GM12878 (cell line): ENCODE measurements at regions of chr1 and their contacts with region 1.

Region 1: GRCh38 chr1:40338745-40339424 is 21.8 kb upstream of the COL9A2 start:
- DNase-seq: peak; percentile 76
- ATAC-seq: peak; percentile 99
- H3K4me3 ChIP-seq: no peak overlapping the region
- H3K27ac ChIP-seq: no peak overlapping the region
- H3K4me1 ChIP-seq: peaks cover 5% of the 10 kb centered on the region; the same call in 1 of the 2 replicates
- H3K27me3 ChIP-seq: no peaks in the 10 kb centered on the region
- CTCF ChIP-seq: peak; percentile 99; a peak in 5 of 6 replicates
- EP300 ChIP-seq: no peak
- POLR2A ChIP-seq: no peak
- RAD21 ChIP-seq: peak; percentile 98

Region 2: DNA sequence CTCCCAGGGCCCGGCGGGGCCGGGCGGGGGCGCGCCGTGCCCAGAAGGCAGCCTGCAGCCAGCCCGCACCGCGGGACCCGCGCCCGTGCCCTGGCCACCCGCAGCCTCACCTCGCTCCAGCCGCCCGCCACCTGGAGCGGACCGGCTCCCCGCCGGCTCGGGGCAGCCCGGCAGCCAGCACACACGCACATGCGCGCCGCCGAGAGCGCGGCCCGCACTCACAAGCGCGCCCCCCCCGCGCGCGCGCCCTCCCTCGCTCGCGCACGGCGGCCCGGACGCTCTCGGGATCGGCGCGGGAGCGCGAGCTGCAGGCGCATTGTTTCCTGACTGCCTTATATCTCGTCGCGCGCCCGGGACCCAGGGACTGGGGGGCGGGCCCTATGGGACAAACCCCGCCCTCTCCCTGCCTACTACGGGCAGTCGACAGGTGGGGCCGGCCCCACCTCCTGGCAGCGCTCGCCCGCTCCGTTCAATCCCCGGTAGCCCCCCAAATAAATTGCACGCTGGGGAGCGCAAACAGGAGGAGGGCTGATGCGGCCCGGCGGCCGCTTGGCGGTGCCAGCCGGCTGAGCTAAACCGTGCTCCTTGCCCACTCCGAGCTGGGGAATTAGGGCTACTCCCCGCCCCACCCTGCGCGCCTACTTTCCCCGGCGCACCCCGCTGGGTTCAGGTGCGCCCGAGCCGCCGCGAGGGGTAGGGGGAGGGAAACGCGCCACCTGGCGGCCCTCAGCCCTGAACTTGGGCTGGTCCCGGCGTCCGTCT is 437.0 kb before region 1 on chr1 and contains the start of gene MYCL:
- CTCF ChIA-PET with region 1: no interaction called
- POLR2A ChIA-PET with region 1: no interaction called
- RAD21 ChIA-PET with region 1: no interaction called
- SMC1A ChIA-PET with region 1: no interaction called
- in situ Hi-C with region 1: no loop called
- intact Hi-C with region 1: no loop called
- DNase-seq: no peak
- ATAC-seq: peak; percentile 93
- H3K4me3 ChIP-seq: peak within 1 kb of the TSS; percentile 77
- H3K27ac ChIP-seq: no peak within 1 kb of the TSS
- H3K4me1 ChIP-seq: peaks cover 7% of the 10 kb centered on the region; the same call in 1 of the 2 replicates
- H3K27me3 ChIP-seq: peaks cover 10 to 12% of the 10 kb centered on the region in 2 experiments
- CTCF ChIP-seq: peak; percentile 61 to 84 (median 78)
- EP300 ChIP-seq: no peak
- POLR2A ChIP-seq: peak; percentile 63
- RAD21 ChIP-seq: peak; percentile 69
- polyA plus RNA-seq, gene MYCL: 0.11 to 0.26 TPM

Region 3: DNA sequence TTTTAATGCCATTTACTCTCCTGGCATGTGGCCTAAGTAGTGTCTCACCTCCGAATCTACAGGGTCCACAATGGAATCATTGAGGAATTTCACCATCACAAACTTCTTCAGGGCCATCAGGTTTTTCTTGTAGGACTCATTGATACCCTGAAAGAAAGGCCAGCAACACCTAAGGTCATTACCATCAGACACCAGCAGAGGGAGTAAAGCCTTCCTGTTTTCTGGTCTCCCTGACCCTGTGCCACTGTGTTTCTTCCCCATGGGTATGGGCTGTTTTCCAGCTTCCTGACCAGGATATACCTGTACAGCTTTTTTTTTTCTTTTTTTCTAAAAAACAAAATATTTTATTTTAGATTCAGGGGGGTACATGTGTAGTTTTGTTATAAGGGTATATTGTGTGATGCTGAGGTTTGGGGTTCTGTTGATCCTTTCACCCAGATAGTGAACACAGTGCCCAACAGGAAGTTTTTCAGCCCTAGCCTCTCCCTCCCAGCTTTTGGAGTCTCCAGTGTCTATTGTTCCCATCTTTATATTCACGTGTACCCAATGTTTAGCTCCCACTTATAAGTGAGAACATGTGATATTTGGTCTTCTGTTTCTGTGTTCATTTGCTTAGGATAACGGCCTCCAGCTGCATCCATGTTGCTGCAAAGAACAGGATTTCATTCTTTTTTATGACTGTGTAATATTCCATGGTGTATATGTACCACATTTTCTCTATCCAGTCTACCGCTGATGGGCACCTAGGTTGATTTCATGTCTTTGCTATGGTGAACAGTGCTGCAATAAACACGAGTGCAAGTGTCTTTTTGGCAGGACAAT is 260.2 kb before region 1 on chr1:
- CTCF ChIA-PET with region 1: interaction called, 271 read pairs
- POLR2A ChIA-PET with region 1: no interaction called
- RAD21 ChIA-PET with region 1: interaction called, 33 read pairs
- SMC1A ChIA-PET with region 1: interaction called, 37 read pairs
- in situ Hi-C with region 1: loop called (anchors 5 kb)
- intact Hi-C with region 1: loop called (anchors 1 kb)
- DNase-seq: no peak
- ATAC-seq: peak; percentile 98
- H3K4me3 ChIP-seq: no peak overlapping the region
- H3K27ac ChIP-seq: no peak overlapping the region
- H3K4me1 ChIP-seq: no peaks in the 10 kb centered on the region
- H3K27me3 ChIP-seq: no peaks in the 10 kb centered on the region
- CTCF ChIP-seq: peak; percentile 74 to 85 (median 75)
- EP300 ChIP-seq: no peak
- POLR2A ChIP-seq: no peak
- RAD21 ChIP-seq: peak; percentile 63

Region 4: GRCh38 chr1:40161125-40161887 is 177.6 kb before region 1 on chr1 and contains the start of gene RLF:
- CTCF ChIA-PET with region 1: interaction called, 332 read pairs
- POLR2A ChIA-PET with region 1: no interaction called
- RAD21 ChIA-PET with region 1: interaction called, 8 read pairs
- SMC1A ChIA-PET with region 1: interaction called, 182 read pairs
- in situ Hi-C with region 1: no loop called
- intact Hi-C with region 1: no loop called
- DNase-seq: peak; percentile 67
- ATAC-seq: peak; percentile 92
- H3K4me3 ChIP-seq: peak within 1 kb of the TSS; percentile 97
- H3K27ac ChIP-seq: peak within 1 kb of the TSS; percentile 93
- H3K4me1 ChIP-seq: no peaks in the 10 kb centered on the region
- H3K27me3 ChIP-seq: no peaks in the 10 kb centered on the region
- CTCF ChIP-seq: no peak
- EP300 ChIP-seq: no peak; a peak in 1 of 4 replicates
- POLR2A ChIP-seq: peak; percentile 99
- RAD21 ChIP-seq: no peak
- polyA plus RNA-seq, gene RLF: 2.0 to 3.6 TPM

Region 5: DNA sequence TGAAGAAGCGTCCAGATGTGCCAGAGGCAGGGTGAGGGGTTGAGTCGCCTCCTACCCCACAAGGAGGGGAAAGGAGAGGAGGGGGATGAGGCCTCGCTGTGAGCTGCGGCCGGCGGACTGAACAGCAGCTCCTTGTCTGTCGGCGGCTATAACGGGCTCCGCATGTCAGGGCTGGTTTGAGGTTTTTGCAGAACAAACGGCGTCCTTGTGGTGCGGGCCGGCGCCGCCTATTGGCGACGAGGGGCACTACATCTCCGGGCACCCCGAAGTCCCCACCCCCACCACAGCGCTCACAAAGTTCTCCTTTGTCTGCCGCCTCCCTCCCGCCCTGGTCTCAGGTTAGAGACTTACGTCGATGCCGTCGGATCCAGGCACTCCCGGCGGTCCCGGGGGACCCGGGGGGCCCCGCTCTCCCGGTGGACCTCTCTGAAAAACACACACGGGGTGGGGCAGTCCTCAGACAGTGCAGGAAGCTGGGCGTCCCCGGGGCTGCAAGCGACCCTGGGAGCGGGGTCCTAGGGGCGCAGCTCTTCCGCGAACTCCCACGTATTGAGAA is 23.6 kb before region 1 on chr1:
- CTCF ChIA-PET with region 1: interaction called, 170 read pairs
- POLR2A ChIA-PET with region 1: interaction called, 4 read pairs
- RAD21 ChIA-PET with region 1: interaction called, 75 read pairs
- SMC1A ChIA-PET with region 1: interaction called, 81 read pairs
- in situ Hi-C with region 1: no loop called
- intact Hi-C with region 1: no loop called
- DNase-seq: peak; percentile 53
- ATAC-seq: peak; percentile 72
- H3K4me3 ChIP-seq: peak overlapping the region; percentile 70
- H3K27ac ChIP-seq: peak overlapping the region; percentile 59
- H3K4me1 ChIP-seq: peaks cover 41% of the 10 kb centered on the region
- H3K27me3 ChIP-seq: peaks cover 4 to 9% of the 10 kb centered on the region in 2 experiments; a peak in 3 of 4 replicates
- CTCF ChIP-seq: peak; percentile 96 to 98 (median 98)
- EP300 ChIP-seq: peak in 1 of 2 experiments; percentile 24; a peak in 1 of 4 replicates
- POLR2A ChIP-seq: peak; percentile 87
- RAD21 ChIP-seq: peak; percentile 69

Region 6: DNA sequence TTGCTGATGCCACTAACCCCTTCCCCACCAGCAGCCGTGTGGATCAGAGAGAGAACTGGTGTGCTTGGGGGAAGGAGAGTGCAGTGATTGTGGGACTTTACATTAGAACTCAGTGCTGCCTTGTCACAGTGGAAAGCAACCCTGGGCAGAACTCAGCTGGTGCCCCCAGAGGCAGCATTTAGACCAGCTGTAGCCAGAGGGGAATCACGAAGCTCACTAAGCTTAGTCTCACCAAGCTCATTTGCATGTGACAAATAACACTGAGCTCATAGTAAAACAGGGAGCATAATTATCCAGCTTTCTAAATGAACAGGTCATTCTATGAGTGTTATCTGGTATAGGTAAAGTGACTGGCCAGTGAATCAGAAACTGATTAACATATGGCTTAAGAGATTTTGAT is 24.8 kb after region 1 on chr1:
- CTCF ChIA-PET with region 1: interaction called, 30 read pairs
- POLR2A ChIA-PET with region 1: interaction called, 3 read pairs
- RAD21 ChIA-PET with region 1: interaction called, 14 read pairs
- SMC1A ChIA-PET with region 1: interaction called, 27 read pairs
- in situ Hi-C with region 1: no loop called
- intact Hi-C with region 1: no loop called
- DNase-seq: no peak
- ATAC-seq: peak; percentile 100
- H3K4me3 ChIP-seq: no peak overlapping the region
- H3K27ac ChIP-seq: no peak overlapping the region
- H3K4me1 ChIP-seq: no peaks in the 10 kb centered on the region; the same call in 1 of the 2 replicates
- H3K27me3 ChIP-seq: no peaks in the 10 kb centered on the region
- CTCF ChIP-seq: peak; percentile 28 to 43 (median 36); a peak in 4 of 6 replicates
- EP300 ChIP-seq: no peak
- POLR2A ChIP-seq: no peak
- RAD21 ChIP-seq: peak; percentile 32

Region 7: GRCh38 chr1:40385437-40386358 is 46.8 kb after region 1 on chr1:
- CTCF ChIA-PET with region 1: interaction called, 17 read pairs
- POLR2A ChIA-PET with region 1: interaction called, 14 read pairs
- RAD21 ChIA-PET with region 1: interaction called, 8 read pairs
- SMC1A ChIA-PET with region 1: interaction called, 29 read pairs
- in situ Hi-C with region 1: no loop called
- intact Hi-C with region 1: no loop called
- DNase-seq: peak; percentile 98
- ATAC-seq: peak; percentile 72
- H3K4me3 ChIP-seq: peak overlapping the region; percentile 66
- H3K27ac ChIP-seq: peak overlapping the region; percentile 97
- H3K4me1 ChIP-seq: peaks cover 65% of the 10 kb centered on the region
- H3K27me3 ChIP-seq: no peaks in the 10 kb centered on the region
- CTCF ChIP-seq: no peak
- EP300 ChIP-seq: peak; percentile 98 to 99
- POLR2A ChIP-seq: no peak
- RAD21 ChIP-seq: peak; percentile 15; the same call in 1 of the 2 replicates